CD14-positive monocyte (primary cell): ENCODE measurements at regions of chr6 and their contacts with region 1.

Region 1: GRCh38 chr6:132669690-132670291 is 10.8 kb upstream of the TAAR1 start:
- DNase-seq: peak; percentile 51 to 68 (median 66)
- H3K4me3 ChIP-seq: peak overlapping the region in 1 of 3 experiments; percentile 23
- H3K4me3 Mint-ChIP-seq: peak overlapping the region in 1 of 2 donors; percentile 37
- H3K27ac ChIP-seq: peak overlapping the region in 1 of 2 donors; percentile 13
- H3K27ac Mint-ChIP-seq: peak overlapping the region; percentile 55 to 94 (median 86)
- H3K4me1 ChIP-seq: peaks cover 10 to 16% of the 10 kb centered on the region in 2 donors
- H3K4me1 Mint-ChIP-seq: peaks cover 14% of the 10 kb centered on the region
- H3K27me3 ChIP-seq: no peaks in the 10 kb centered on the region
- H3K27me3 Mint-ChIP-seq: no peaks in the 10 kb centered on the region
- CTCF ChIP-seq: peak; percentile 78

Region 2: DNA sequence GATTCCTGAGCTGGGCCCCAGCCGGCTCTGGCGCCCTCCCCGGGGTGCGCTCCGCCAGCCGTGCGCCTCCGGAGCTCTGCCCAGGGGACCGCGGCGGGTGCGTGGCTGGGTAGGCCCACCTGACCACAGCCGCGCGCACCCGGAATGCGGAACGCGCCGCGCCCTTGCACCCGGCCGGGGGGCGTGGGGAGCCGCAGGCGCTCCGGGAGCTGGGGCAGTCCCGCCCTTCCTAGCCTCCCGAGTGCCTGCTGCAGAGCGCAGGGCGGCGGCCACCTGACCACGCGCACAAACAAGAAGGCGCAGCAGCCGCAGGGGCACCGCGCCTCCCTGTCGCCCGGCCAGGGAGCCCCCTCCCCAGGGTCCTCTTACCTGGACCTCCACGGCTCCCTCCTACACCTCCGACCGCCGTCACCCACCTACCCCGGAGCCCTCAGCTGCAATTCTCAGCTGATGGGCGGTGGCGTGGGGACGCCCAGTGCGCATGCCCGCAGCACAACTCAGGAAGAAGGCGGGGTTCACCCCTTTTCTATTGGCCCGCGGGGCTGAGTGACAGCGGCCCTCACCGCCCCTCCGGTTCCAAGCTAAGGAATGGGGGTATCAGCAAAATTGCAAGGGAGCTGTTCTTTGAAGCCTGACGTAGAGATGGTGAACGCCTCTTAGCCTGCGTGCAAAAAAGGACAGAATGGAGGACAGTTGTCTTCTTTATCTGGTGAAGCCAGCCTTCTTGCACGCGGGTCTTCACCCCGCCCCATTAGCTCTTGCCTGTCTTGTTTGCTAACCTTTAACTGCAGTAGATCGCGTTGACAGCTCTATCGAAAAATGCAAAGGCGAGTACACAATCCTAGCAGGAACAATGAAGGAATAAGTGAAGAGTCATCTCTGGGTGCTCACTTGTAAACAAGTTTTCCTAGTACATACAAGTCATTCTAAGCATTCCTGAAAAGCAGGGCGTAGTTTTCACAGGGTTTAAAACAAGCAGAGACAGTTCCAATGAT is 156.9 kb before region 1 on chr6 and contains the start of gene STX7:
- intact Hi-C with region 1: loop called in 1 of 2 experiments (anchors 10 kb)
- DNase-seq: peak; percentile 73 to 84 (median 78)
- H3K4me3 ChIP-seq: peak within 1 kb of the TSS; percentile 81 to 92 (median 84)
- H3K4me3 Mint-ChIP-seq: peak within 1 kb of the TSS; percentile 95 to 99
- H3K27ac ChIP-seq: peak within 1 kb of the TSS; percentile 79 to 85
- H3K27ac Mint-ChIP-seq: peak within 1 kb of the TSS; percentile 92 to 98 (median 97)
- H3K4me1 ChIP-seq: peaks cover 33 to 42% of the 10 kb centered on the region in 2 donors
- H3K4me1 Mint-ChIP-seq: peaks cover 45% of the 10 kb centered on the region
- H3K27me3 ChIP-seq: no peaks in the 10 kb centered on the region
- H3K27me3 Mint-ChIP-seq: peaks cover 0 to 2% (median 2%) of the 10 kb centered on the region in 3 donors
- CTCF ChIP-seq: no peak
- polyA plus RNA-seq, gene STX7: 49.7 to 85.1 (median 81.7) TPM

Region 3: DNA sequence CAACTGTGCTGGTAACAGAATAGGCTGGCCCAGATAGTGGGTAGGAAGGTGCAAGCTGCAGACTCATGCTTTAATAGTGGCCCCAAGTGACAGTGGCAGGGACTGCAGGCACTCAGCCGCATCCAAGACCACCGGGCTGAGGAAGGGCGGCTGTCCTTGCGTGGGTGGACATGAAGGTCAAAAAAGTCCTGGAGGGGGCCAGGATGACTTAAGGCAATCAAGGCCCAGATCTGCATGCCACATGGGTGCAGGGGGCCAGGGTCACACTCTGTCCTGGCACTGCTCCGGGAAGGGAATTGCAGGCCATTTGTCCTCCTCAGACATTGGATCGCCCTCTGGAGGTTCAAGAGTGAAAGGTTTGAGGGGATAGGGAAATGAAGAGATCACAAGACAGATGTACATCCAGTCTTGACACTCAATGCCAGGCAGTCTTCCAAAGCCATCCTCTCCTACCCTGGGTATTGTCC is 98.3 kb after region 1 on chr6:
- intact Hi-C with region 1: loop called (anchors 2 kb)
- DNase-seq: peak; percentile 64 to 68 (median 64)
- H3K4me3 ChIP-seq: peak overlapping the region; percentile 32 to 73 (median 44)
- H3K4me3 Mint-ChIP-seq: peak overlapping the region; percentile 75 to 88
- H3K27ac ChIP-seq: peak overlapping the region in 1 of 2 donors; percentile 42
- H3K27ac Mint-ChIP-seq: peak overlapping the region; percentile 63 to 91 (median 79)
- H3K4me1 ChIP-seq: peaks cover 17 to 24% of the 10 kb centered on the region in 2 donors
- H3K4me1 Mint-ChIP-seq: peaks cover 31% of the 10 kb centered on the region
- H3K27me3 ChIP-seq: no peaks in the 10 kb centered on the region
- H3K27me3 Mint-ChIP-seq: peaks cover 0 to 2% (median 2%) of the 10 kb centered on the region in 3 donors
- CTCF ChIP-seq: peak; percentile 99

Region 4: GRCh38 chr6:132813173-132813856 is 143.5 kb after region 1 on chr6:
- intact Hi-C with region 1: loop called in 1 of 2 experiments (anchors 5 kb)
- DNase-seq: peak; percentile 56 to 69 (median 67)
- H3K4me3 ChIP-seq: peak overlapping the region; percentile 77 to 89 (median 82)
- H3K4me3 Mint-ChIP-seq: peak overlapping the region; percentile 98 to 99
- H3K27ac ChIP-seq: peak overlapping the region; percentile 85 to 90
- H3K27ac Mint-ChIP-seq: peak overlapping the region; percentile 93 to 97 (median 95)
- H3K4me1 ChIP-seq: peaks cover 22 to 26% of the 10 kb centered on the region in 2 donors
- H3K4me1 Mint-ChIP-seq: peaks cover 27% of the 10 kb centered on the region
- H3K27me3 ChIP-seq: no peaks in the 10 kb centered on the region
- H3K27me3 Mint-ChIP-seq: peaks cover 3 to 6% (median 5%) of the 10 kb centered on the region in 3 donors
- CTCF ChIP-seq: no peak